ENCODE measurements at regions of chr2 and their contacts with region 1.

Region 1: GRCh38 chr2:47388888-47389287 is 14.1 kb upstream of the MSH2 start:
- DNase-seq: no peak

Region 2: GRCh38 chr2:47334356-47335136 is 54.3 kb before region 1 on chr2:
- intact Hi-C with region 1: loop called (anchors 1 kb)
- DNase-seq: peak in 1 of 10 donors; percentile 81

Region 3: GRCh38 chr2:47429795-47430194 is 40.9 kb after region 1 on chr2:
- intact Hi-C with region 1: no loop called
- DNase-seq: no peak